ENCODE measurements at regions of chr7 and their contacts with region 1.

Region 1: GRCh38 chr7:128862571-128863432 is at the start of gene ATP6V1F:
- DNase-seq: peak; percentile 98 to 100 (median 99)
- ATAC-seq: peak; percentile 87
- H3K4me3 ChIP-seq: peak within 1 kb of the TSS; percentile 87
- H3K4me3 Mint-ChIP-seq: peak within 1 kb of the TSS; percentile 99
- H3K27ac ChIP-seq: peak within 1 kb of the TSS; percentile 62 to 77
- H3K27ac Mint-ChIP-seq: peak within 1 kb of the TSS; percentile 81
- H3K4me1 ChIP-seq: peaks cover 27% of the 10 kb centered on the region
- H3K4me1 Mint-ChIP-seq: peaks cover 40% of the 10 kb centered on the region
- H3K27me3 ChIP-seq: no peaks in the 10 kb centered on the region
- H3K27me3 Mint-ChIP-seq: no peaks in the 10 kb centered on the region
- CTCF ChIP-seq: no peak
- total RNA-seq, gene ATP6V1F: 49.6 to 54.3 TPM

Region 2: GRCh38 chr7:127651556-127652332 is 1211.1 kb before region 1 on chr7 and contains the start of gene SND1:
- CTCF ChIA-PET with region 1: no interaction called
- POLR2A ChIA-PET with region 1: no interaction called
- intact Hi-C with region 1: loop called in 1 of 2 experiments (anchors 5 kb)
- DNase-seq: peak; percentile 95 to 100 (median 98)
- ATAC-seq: peak; percentile 93
- H3K4me3 ChIP-seq: peak within 1 kb of the TSS; percentile 99
- H3K4me3 Mint-ChIP-seq: peak within 1 kb of the TSS; percentile 93
- H3K27ac ChIP-seq: peak within 1 kb of the TSS; percentile 89 to 94
- H3K27ac Mint-ChIP-seq: no peak within 1 kb of the TSS
- H3K4me1 ChIP-seq: peaks cover 43% of the 10 kb centered on the region
- H3K4me1 Mint-ChIP-seq: peaks cover 55% of the 10 kb centered on the region
- H3K27me3 ChIP-seq: no peaks in the 10 kb centered on the region
- H3K27me3 Mint-ChIP-seq: no peaks in the 10 kb centered on the region
- CTCF ChIP-seq: no peak
- total RNA-seq, gene SND1: 104 to 113 TPM

Region 3: DNA sequence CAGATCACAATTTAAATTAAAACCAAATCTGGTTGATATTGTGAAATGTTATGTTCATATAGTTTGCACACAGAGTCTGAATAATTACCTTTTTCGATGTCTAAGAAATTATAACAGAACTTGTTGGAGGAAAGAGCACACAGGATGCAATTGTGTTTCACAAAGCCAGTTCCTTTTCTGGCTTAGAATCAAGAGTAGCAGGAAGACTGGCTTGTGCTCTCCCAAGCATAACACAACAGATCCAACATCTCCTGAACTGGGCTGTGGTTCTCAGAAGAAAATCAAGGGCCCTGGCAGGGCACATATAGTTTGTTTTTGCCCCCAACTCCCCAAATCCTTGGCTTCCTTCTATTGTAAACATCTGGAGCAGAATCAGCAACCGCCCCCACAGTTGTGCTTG is 894.3 kb before region 1 on chr7:
- CTCF ChIA-PET with region 1: no interaction called
- POLR2A ChIA-PET with region 1: no interaction called
- intact Hi-C with region 1: no loop called
- DNase-seq: no peak
- ATAC-seq: no peak
- H3K4me3 ChIP-seq: no peak overlapping the region
- H3K4me3 Mint-ChIP-seq: no peak overlapping the region
- H3K27ac ChIP-seq: no peak overlapping the region
- H3K27ac Mint-ChIP-seq: no peak overlapping the region
- H3K4me1 ChIP-seq: no peaks in the 10 kb centered on the region
- H3K4me1 Mint-ChIP-seq: no peaks in the 10 kb centered on the region
- H3K27me3 ChIP-seq: no peaks in the 10 kb centered on the region
- H3K27me3 Mint-ChIP-seq: no peaks in the 10 kb centered on the region
- CTCF ChIP-seq: no peak

Region 4: DNA sequence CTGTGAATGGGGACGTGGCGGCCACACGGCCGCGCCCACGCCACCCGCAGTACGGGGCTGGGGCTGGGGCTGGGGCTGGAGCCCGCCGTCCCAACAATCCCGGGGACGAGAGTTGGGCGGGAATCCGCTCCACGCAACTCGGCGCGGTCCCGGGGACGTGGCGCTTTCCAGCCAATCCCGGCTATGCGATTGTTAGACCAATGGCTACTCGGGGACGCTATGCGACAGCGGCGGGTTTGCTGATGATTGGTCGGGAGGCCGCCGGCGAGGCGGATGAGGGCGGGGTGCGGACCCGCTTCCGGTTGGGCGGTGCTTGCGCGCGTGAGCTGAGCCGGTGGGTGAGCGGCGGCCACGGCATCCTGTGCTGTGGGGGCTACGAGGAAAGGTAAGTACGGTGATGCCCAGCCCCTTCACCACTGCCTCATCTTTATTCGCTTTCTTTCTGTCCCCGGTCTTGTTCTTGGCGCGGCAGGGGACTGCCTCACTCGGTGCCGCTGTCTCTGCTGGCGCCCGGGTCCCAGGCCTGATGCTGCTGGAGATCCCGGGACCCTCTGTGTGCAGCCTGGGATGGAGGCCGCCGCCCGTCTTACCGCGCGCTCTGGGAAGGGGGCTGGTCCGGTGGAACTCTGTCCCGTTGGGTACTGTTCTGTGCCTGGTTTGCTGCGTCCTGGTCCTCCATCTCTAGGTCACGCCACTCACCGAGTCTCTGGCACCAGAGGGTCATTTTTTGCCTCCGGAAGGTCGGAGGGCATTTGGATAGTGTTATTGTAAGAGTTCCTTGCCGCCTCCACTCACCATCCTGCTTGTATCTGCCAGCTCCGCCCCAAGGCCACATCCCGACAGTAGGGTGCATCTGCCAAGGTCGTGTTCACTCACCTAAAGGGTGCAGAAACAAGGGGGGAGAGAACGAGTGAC is 123.5 kb before region 1 on chr7 and contains the start of gene CALU:
- CTCF ChIA-PET with region 1: no interaction called
- POLR2A ChIA-PET with region 1: interaction called, 10 read pairs
- intact Hi-C with region 1: loop called in 1 of 2 experiments (anchors 5 kb)
- DNase-seq: peak; percentile 87 to 97 (median 91)
- ATAC-seq: peak; percentile 91
- H3K4me3 ChIP-seq: peak within 1 kb of the TSS; percentile 97
- H3K4me3 Mint-ChIP-seq: peak within 1 kb of the TSS; percentile 100
- H3K27ac ChIP-seq: peak within 1 kb of the TSS; percentile 80 to 93
- H3K27ac Mint-ChIP-seq: peak within 1 kb of the TSS; percentile 96
- H3K4me1 ChIP-seq: peaks cover 19% of the 10 kb centered on the region
- H3K4me1 Mint-ChIP-seq: peaks cover 46% of the 10 kb centered on the region
- H3K27me3 ChIP-seq: no peaks in the 10 kb centered on the region
- H3K27me3 Mint-ChIP-seq: no peaks in the 10 kb centered on the region
- CTCF ChIP-seq: no peak
- total RNA-seq, gene CALU: 28.4 to 29.9 TPM

Region 5: DNA sequence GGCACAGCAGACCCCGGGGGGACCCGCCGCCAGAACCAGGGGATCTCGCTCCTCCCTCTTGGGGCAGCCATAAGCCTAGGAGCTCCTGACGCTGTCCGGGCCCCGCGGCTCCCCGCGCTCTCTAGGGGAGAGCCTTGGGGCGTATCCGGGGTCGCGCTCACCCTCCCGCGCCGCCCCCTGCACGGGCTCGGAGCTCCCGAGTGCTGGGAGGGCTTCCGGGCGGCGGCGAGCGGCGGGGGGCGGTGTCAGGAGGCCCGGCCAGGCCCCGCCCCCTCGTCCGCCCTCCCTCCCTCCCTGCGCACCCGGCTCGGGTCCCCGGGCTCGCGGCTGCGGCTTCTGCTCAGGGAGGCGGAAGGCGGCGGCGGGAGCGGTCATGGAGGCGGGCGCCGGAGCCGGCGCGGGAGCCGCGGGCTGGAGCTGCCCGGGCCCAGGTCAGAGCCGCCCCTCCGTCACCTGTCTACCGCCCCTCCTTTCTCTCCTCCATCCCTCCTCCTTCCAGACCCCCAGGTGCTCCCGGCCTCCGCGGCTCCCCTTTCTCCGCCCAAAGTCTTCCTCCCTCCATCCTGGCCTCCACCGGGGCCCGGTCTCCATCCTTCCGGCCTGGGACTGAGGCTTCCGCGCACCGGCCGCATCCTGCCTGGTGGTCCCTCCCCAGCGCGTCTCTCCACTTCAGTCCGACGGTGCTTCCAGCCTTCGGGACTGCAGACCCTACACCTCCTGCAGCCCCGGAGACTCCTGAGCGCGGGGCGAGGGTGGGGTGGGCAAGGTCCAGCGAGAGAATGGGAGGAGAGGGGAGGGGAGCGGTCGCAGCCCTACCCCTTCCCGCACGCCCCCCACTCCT is 71.5 kb before region 1 on chr7:
- CTCF ChIA-PET with region 1: no interaction called
- POLR2A ChIA-PET with region 1: interaction called, 5 read pairs
- intact Hi-C with region 1: loop called in 1 of 2 experiments (anchors 2 kb)
- DNase-seq: peak; percentile 57 to 90 (median 78)
- ATAC-seq: peak; percentile 88
- H3K4me3 ChIP-seq: peak overlapping the region; percentile 79
- H3K4me3 Mint-ChIP-seq: peak overlapping the region; percentile 88
- H3K27ac ChIP-seq: no peak overlapping the region
- H3K27ac Mint-ChIP-seq: no peak overlapping the region
- H3K4me1 ChIP-seq: peaks cover 22% of the 10 kb centered on the region
- H3K4me1 Mint-ChIP-seq: peaks cover 6% of the 10 kb centered on the region
- H3K27me3 ChIP-seq: no peaks in the 10 kb centered on the region
- H3K27me3 Mint-ChIP-seq: no peaks in the 10 kb centered on the region
- CTCF ChIP-seq: no peak

Region 6: GRCh38 chr7:128883622-128884501 is 21.1 kb after region 1 on chr7:
- CTCF ChIA-PET with region 1: interaction called, 45 read pairs
- POLR2A ChIA-PET with region 1: interaction called, 4 read pairs
- intact Hi-C with region 1: loop called in 1 of 2 experiments (anchors 2 kb)
- DNase-seq: peak; percentile 75 to 92 (median 84)
- ATAC-seq: peak; percentile 92
- H3K4me3 ChIP-seq: peak overlapping the region; percentile 36
- H3K4me3 Mint-ChIP-seq: no peak overlapping the region
- H3K27ac ChIP-seq: no peak overlapping the region
- H3K27ac Mint-ChIP-seq: no peak overlapping the region
- H3K4me1 ChIP-seq: peaks cover 6% of the 10 kb centered on the region
- H3K4me1 Mint-ChIP-seq: no peaks in the 10 kb centered on the region
- H3K27me3 ChIP-seq: peaks cover 7 to 15% of the 10 kb centered on the region in 2 experiments
- H3K27me3 Mint-ChIP-seq: peaks cover 5% of the 10 kb centered on the region
- CTCF ChIP-seq: peak; percentile 99

Region 7: GRCh38 chr7:128894101-128894440 is 31.3 kb after region 1 on chr7:
- CTCF ChIA-PET with region 1: no interaction called
- POLR2A ChIA-PET with region 1: no interaction called
- intact Hi-C with region 1: no loop called
- DNase-seq: no peak
- ATAC-seq: no peak
- H3K4me3 ChIP-seq: no peak overlapping the region
- H3K4me3 Mint-ChIP-seq: no peak overlapping the region
- H3K27ac ChIP-seq: no peak overlapping the region
- H3K27ac Mint-ChIP-seq: no peak overlapping the region
- H3K4me1 ChIP-seq: peaks cover 7% of the 10 kb centered on the region
- H3K4me1 Mint-ChIP-seq: no peaks in the 10 kb centered on the region
- H3K27me3 ChIP-seq: peaks cover 15 to 18% of the 10 kb centered on the region in 2 experiments
- H3K27me3 Mint-ChIP-seq: peaks cover 15% of the 10 kb centered on the region
- CTCF ChIP-seq: no peak

Region 8: DNA sequence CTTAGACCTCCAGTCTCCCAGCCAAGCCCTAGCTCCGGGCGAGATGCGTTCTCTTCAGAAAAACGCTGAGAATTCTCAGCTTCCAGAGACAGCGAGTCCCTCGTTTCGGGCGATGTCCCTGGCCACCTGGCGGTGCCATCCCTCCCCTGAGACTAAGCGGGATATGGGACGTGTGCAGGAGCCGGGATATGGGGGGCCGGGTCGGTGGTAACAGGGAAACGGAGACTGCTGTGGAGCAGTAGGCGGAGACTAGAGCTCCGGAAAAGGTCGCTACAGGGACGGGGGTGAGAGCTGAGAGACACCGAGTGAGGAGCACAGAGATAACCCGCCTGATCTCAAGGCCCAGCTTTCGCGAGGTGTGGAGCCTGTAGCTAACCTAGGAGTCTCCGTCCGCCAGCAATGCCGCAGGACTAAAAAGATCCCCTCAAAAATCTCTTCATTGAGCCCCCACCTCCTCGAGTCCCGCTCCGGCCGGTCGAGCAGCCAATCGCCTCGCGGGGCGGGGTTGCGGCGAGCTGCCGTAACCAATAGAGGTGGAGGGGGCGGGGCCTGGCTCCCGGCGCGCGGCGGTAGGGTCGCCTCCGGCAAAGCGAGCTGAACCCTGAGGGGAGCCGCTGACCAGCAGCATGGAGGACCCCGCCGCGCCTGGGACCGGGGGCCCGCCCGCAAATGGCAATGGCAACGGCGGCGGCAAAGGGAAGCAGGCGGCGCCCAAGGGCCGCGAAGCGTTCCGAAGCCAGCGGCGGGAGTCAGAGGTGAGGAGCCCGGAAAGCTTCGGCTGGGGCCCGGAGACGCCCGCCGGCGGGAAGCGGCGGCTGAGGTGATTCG is 571.3 kb after region 1 on chr7 and contains the start of gene STRIP2:
- CTCF ChIA-PET with region 1: no interaction called
- POLR2A ChIA-PET with region 1: no interaction called
- intact Hi-C with region 1: loop called in 1 of 2 experiments (anchors 10 kb)
- DNase-seq: peak; percentile 68 to 92 (median 84)
- ATAC-seq: peak; percentile 94
- H3K4me3 ChIP-seq: peak within 1 kb of the TSS; percentile 88
- H3K4me3 Mint-ChIP-seq: peak within 1 kb of the TSS; percentile 95
- H3K27ac ChIP-seq: no peak within 1 kb of the TSS
- H3K27ac Mint-ChIP-seq: peak within 1 kb of the TSS; percentile 34
- H3K4me1 ChIP-seq: peaks cover 19% of the 10 kb centered on the region
- H3K4me1 Mint-ChIP-seq: peaks cover 23% of the 10 kb centered on the region
- H3K27me3 ChIP-seq: peaks cover 15 to 30% of the 10 kb centered on the region in 2 experiments
- H3K27me3 Mint-ChIP-seq: peaks cover 35% of the 10 kb centered on the region
- CTCF ChIP-seq: peak; percentile 16
- total RNA-seq, gene STRIP2: 0.11 to 0.14 TPM